Left cardiac atrium (tissue), 4 donors: ENCODE measurements at regions of chr9 and their contacts with region 1.

Region 1: GRCh38 chr9:73200694-73201452 is 49.2 kb downstream of the ANXA1 start:
- DNase-seq: no peak
- ATAC-seq: peak in 1 of 2 donors; percentile 41

Region 2: DNA sequence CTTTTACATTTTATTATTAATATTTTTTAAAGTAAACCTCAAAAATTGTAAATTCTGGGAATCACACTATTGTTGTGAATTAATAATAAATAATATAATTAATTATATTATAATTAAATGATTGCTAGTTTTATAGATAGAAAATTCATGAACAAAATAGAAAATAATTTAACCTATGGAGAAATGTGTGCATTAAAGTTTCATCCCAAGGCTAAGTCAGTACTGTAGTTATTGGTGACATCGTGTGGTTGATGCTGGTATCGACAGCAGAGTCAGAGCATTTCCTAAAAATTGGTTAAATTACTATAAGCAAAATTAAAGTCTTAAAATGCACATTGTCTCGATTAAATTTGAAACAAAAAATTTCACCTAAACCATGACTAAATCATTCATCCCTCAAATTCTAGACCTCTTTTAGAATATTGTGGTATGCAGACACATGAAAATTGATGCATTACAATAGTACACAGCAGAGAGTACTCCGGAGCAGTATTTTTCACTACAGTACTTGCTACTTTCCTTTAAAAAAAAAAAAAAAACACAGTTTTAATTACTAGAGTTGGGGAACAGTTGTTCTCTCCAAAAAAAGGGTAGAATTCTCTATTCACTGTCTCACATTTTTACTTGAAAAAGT is 1370.1 kb after region 1 on chr9:
- intact Hi-C with region 1: loop called in 1 of 2 experiments (anchors 10 kb)
- DNase-seq: no peak
- ATAC-seq: no peak